Tibial artery (tissue), 4 donors: ENCODE measurements at regions of chr20 and their contacts with region 1.

Region 1: GRCh38 chr20:34522969-34523871 is 7.0 kb downstream of the DYNLRB1 start:
- DNase-seq: peak in 1 of 2 donors; percentile 64
- H3K4me3 ChIP-seq: no peak overlapping the region
- H3K27ac ChIP-seq: peak overlapping the region; percentile 56 to 57
- H3K4me1 ChIP-seq: peaks cover 0 to 85% (median 51%) of the 10 kb centered on the region in 4 donors
- H3K27me3 ChIP-seq: no peaks in the 10 kb centered on the region
- CTCF ChIP-seq: peak; percentile 42 to 52

Region 2: GRCh38 chr20:34312544-34313217 is 210.5 kb before region 1 on chr20:
- intact Hi-C with region 1: loop called (anchors 5 kb)
- DNase-seq: peak; percentile 82 to 88
- H3K4me3 ChIP-seq: peak overlapping the region in 1 of 2 donors; percentile 17
- H3K27ac ChIP-seq: no peak overlapping the region
- H3K4me1 ChIP-seq: peaks cover 0 to 20% (median 16%) of the 10 kb centered on the region in 4 donors
- H3K27me3 ChIP-seq: peaks cover 0 to 13% of the 10 kb centered on the region in 2 donors
- CTCF ChIP-seq: peak; percentile 97 to 99